Activated CD4-positive, alpha-beta memory T cell treated with anti-CD3 and anti-CD28 coated beads for 36 hours (primary cell): ENCODE measurements at regions of chr22 and their contacts with region 1.

Region 1: GRCh38 chr22:28976588-28976987 is 85.0 kb downstream of the C22orf31 start:
- DNase-seq: no peak
- H3K4me3 Mint-ChIP-seq: no peak overlapping the region
- H3K27ac Mint-ChIP-seq: no peak overlapping the region
- H3K4me1 Mint-ChIP-seq: peaks cover 3% of the 10 kb centered on the region
- H3K27me3 Mint-ChIP-seq: peaks cover 19% of the 10 kb centered on the region

Region 2: GRCh38 chr22:28647216-28647615 is 329.4 kb before region 1 on chr22:
- CTCF ChIA-PET with region 1: no interaction called
- POLR2A ChIA-PET with region 1: no interaction called
- intact Hi-C with region 1: no loop called
- DNase-seq: no peak
- H3K4me3 Mint-ChIP-seq: no peak overlapping the region
- H3K27ac Mint-ChIP-seq: no peak overlapping the region
- H3K4me1 Mint-ChIP-seq: no peaks in the 10 kb centered on the region
- H3K27me3 Mint-ChIP-seq: peaks cover 35% of the 10 kb centered on the region

Region 3: DNA sequence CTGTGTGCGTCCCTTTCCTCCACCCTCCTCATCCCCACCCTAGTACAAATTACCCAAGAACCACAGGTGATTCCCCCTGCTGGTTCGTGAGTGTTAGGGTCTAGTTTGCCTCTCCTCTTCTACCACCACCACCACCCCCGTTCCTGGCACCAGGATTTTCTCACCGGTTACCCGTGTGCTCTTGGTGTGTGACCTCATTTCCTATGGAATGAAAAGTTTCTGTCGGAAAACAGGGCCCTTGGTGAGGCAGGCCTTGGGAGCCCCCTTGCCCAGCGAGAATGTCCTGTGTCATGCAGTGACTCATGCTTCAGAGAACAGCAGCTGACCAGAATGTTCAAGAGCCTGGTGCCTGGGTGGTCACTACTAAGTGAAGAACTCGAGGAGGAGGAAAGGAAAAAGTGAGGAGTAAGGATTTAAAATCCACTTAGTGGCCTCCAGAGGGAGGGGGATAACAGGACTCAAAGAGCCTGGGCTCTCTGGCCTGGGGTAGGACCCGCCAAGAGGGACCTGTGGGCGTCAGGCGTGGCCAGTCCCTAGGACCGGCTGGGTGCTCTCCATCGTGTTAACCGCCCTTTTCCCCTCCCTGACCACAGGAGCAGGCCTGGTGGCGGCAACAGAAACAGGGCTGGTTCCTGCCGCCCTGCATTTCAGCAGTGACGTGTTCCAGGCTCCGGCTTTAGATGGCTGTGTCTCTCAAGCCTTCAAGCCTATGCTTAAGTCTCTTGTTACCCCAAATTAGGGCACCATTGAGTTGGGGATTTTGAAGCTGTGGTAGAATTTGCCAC is 54.8 kb after region 1 on chr22:
- CTCF ChIA-PET with region 1: no interaction called
- POLR2A ChIA-PET with region 1: no interaction called
- intact Hi-C with region 1: loop called (anchors 10 kb)
- DNase-seq: no peak
- H3K4me3 Mint-ChIP-seq: no peak overlapping the region
- H3K27ac Mint-ChIP-seq: no peak overlapping the region
- H3K4me1 Mint-ChIP-seq: peaks cover 8% of the 10 kb centered on the region
- H3K27me3 Mint-ChIP-seq: peaks cover 33% of the 10 kb centered on the region

Region 4: DNA sequence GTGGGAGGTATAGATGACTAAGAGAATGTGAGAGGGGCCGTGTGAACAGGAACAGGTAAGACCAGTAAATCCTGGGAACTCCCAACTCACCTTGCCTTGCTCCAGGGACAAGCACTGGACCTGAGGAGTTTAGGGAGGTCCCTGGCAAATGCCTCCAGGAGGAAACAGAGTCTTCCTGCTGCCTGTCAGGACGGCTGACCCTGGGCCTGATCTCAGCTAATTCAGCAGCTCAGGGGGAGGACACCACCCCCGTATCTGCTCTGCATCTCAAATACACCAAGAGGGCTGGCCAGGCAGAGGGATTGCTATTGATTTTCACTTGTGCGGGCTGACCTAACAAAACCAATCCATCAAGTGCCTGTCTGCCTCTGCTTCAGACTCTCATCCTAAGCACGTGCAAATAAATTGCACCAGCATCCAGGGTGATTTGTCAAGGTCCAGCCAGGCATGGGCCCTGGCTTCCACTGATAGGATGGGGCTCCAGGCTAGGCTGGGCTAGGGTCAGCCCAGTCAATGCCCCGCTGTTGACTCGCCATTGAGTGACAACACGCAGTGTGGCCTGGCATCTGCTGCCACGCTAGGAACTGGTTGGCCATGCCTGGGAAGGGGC is 810.9 kb after region 1 on chr22:
- CTCF ChIA-PET with region 1: no interaction called
- POLR2A ChIA-PET with region 1: no interaction called
- intact Hi-C with region 1: no loop called
- DNase-seq: no peak
- H3K4me3 Mint-ChIP-seq: no peak overlapping the region
- H3K27ac Mint-ChIP-seq: no peak overlapping the region
- H3K4me1 Mint-ChIP-seq: no peaks in the 10 kb centered on the region
- H3K27me3 Mint-ChIP-seq: no peaks in the 10 kb centered on the region